CD4-positive, alpha-beta T cell (primary cell): ENCODE measurements at regions of chr6 and their contacts with region 1.

Region 1: DNA sequence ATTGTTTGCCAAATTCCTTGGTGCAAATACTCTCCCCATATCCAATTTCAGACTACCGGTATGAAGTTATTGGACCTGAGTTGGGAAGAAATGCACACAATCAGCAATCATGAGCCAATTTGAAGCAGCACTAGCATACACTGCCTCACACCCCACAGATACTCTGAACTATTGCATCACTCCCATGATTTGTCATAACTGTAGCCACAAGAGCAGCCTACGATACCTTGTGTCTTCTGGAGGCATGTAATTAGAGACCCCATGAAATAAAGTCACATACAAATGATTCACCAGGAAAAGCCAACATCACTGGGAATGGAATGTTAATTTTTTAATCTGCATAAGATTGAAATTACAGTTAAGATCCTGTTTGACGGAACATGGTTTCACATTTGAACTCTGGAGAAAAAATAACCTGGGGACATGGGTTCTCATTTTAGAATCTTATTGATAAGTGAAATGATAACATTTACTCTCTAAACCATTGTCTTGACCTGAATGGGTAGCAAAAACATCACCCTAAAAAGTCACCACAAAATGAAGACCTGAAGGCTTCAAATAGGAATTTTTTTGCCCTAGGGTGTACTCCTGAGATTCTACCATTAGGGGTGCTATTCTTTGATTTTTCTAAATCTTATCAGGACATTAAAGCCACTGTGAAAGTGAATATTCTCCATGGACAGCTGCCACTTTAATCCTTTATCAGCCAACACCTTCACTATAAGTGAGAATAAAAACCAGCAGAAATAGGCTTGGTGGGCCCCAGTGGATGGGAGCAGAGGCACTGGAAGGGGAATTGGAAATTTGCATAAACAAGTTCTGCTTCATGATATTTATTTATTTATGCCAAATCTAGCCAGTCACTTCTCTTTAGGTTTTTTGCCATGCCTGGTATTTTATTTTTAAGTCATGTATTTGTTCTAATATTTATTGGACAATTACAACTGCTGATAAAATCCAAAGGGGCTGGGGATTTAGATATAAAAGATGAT is 34.5 kb upstream of the HBS1L start:
- DNase-seq: peak in 4 of 14 experiments; percentile 50 to 72 (median 64)
- ATAC-seq: peak; percentile 60
- H3K4me3 ChIP-seq: peak overlapping the region; percentile 38
- H3K4me3 Mint-ChIP-seq: peak overlapping the region; percentile 78
- H3K27ac ChIP-seq: peak overlapping the region in 1 of 2 donors; percentile 14
- H3K27ac Mint-ChIP-seq: peak overlapping the region; percentile 94
- H3K4me1 ChIP-seq: peaks cover 44% of the 10 kb centered on the region
- H3K4me1 Mint-ChIP-seq: peaks cover 86% of the 10 kb centered on the region
- H3K27me3 ChIP-seq: no peaks in the 10 kb centered on the region
- H3K27me3 Mint-ChIP-seq: no peaks in the 10 kb centered on the region
- CTCF ChIP-seq: peak; percentile 62

Region 2: DNA sequence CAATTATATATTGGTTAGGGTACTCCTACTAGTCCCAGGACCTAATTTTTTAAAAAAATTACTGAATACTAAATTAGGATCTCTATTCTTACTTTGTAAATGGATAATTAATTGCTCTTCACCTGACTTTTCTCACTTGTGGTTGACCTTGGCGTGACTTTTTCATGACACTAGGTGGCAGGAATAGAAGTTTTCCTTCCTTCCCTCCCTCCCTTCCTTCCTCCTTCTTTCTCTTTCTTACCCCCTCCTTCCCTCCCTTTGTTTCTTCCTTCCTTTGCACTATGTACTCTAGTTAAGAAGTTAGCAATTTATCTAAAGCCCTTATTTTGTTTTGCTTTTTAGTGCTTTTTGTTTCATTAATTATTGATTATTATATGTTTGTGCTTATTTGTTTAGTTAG is 14.1 kb before region 1 on chr6:
- CTCF ChIA-PET with region 1: interaction called, 5 read pairs
- POLR2A ChIA-PET with region 1: interaction called, 12 read pairs
- intact Hi-C with region 1: no loop called
- DNase-seq: no peak
- ATAC-seq: no peak
- H3K4me3 ChIP-seq: no peak overlapping the region
- H3K4me3 Mint-ChIP-seq: no peak overlapping the region
- H3K27ac ChIP-seq: no peak overlapping the region
- H3K27ac Mint-ChIP-seq: no peak overlapping the region
- H3K4me1 ChIP-seq: no peaks in the 10 kb centered on the region
- H3K4me1 Mint-ChIP-seq: peaks cover 10% of the 10 kb centered on the region
- H3K27me3 ChIP-seq: no peaks in the 10 kb centered on the region
- H3K27me3 Mint-ChIP-seq: no peaks in the 10 kb centered on the region
- CTCF ChIP-seq: peak; percentile 37

Region 3: GRCh38 chr6:135105710-135106109 is 16.6 kb after region 1 on chr6:
- CTCF ChIA-PET with region 1: interaction called, 6 read pairs
- POLR2A ChIA-PET with region 1: interaction called, 51 read pairs
- intact Hi-C with region 1: loop called in 1 of 2 experiments (anchors 1 kb)
- DNase-seq: no peak
- ATAC-seq: no peak
- H3K4me3 ChIP-seq: no peak overlapping the region
- H3K4me3 Mint-ChIP-seq: no peak overlapping the region
- H3K27ac ChIP-seq: no peak overlapping the region
- H3K27ac Mint-ChIP-seq: peak overlapping the region; percentile 89
- H3K4me1 ChIP-seq: peaks cover 24% of the 10 kb centered on the region
- H3K4me1 Mint-ChIP-seq: peaks cover 66% of the 10 kb centered on the region
- H3K27me3 ChIP-seq: no peaks in the 10 kb centered on the region
- H3K27me3 Mint-ChIP-seq: no peaks in the 10 kb centered on the region
- CTCF ChIP-seq: no peak